ENCODE measurements at regions of chr3 and their contacts with region 1.

Region 1: DNA sequence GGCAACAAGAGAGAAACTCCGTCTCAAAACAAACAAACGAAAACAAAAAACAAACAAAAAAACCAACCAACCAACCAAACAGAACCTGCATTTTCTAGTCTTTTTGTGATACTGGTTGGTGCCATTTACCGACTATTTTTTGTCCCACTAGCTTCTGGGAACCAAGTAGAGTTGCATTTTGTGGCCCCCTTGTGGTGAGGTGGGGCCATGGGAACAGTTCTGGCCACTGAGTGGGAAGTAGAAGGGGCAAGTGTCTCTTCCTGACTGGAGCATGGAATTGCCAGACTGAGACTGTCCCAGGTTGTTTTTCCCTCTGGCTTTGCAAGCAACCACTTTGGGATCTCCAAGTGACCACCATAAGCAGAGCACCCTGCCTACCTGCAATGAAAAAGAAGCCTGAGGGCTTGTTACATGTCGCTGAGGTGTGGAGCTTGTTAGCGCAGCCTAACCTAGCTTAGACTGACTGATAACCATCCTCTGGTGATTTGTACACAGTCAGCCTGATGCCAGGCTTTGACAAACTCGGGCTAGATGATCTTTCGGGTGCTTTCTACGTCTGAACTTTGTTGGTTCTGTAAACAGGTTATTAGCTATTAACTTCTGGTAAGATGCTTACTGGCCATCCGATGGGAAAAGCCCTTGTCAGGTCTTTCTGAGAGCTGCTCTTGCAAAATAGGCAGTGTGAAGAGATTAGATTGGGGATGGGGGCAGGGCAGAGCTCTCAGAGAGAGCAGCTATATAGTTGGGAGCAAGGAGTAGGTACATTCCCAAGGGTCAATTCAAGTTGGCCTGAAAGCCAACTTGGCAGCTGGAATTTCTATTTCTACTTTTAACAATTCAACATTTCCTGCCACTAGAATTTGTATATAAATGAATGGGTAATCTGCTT is 172.2 kb downstream of the SSR3 start:
- DNase-seq: no peak
- ATAC-seq: no peak
- H3K4me3 ChIP-seq: no peak overlapping the region
- H3K27ac ChIP-seq: peak overlapping the region in 4 of 10 donors; percentile 6 to 61 (median 36)
- H3K4me1 ChIP-seq: peaks cover 0 to 29% (median 3%) of the 10 kb centered on the region in 9 donors
- H3K27me3 ChIP-seq: peaks cover 0 to 4% (median 0%) of the 10 kb centered on the region in 7 donors
- CTCF ChIP-seq: peak in 7 of 9 donors; percentile 30 to 60 (median 38)

Region 2: GRCh38 chr3:155859859-155860258 is 522.8 kb before region 1 on chr3:
- intact Hi-C with region 1: no loop called
- DNase-seq: no peak
- ATAC-seq: no peak
- H3K4me3 ChIP-seq: no peak overlapping the region
- H3K27ac ChIP-seq: no peak overlapping the region
- H3K4me1 ChIP-seq: peaks cover 0 to 9% (median 4%) of the 10 kb centered on the region in 9 donors
- H3K27me3 ChIP-seq: no peaks in the 10 kb centered on the region
- CTCF ChIP-seq: peak in 4 of 9 donors; percentile 25 to 46 (median 34)

Region 3: DNA sequence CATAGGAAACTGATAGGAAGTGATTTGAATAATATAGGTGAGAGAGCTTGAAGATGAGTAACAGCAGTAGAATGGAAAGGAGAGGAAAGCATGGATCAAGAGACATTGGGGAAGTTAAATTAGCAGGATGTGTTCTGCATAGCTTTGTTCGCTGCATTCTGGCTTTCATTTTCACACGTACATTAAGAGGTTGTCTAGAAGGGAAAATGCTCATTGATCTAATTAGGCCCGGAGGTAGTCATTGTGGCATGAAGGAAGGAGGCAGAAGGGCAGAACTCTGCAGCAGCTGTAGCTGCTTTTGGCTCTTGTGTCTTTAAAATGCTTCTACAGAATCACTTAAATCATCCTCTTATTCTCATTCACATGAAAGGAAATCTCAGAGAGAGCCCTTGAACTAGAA is 222.1 kb before region 1 on chr3:
- intact Hi-C with region 1: loop called in 2 of 10 experiments (anchors 10 kb)
- DNase-seq: no peak
- ATAC-seq: no peak
- H3K4me3 ChIP-seq: no peak overlapping the region
- H3K27ac ChIP-seq: no peak overlapping the region
- H3K4me1 ChIP-seq: no peaks in the 10 kb centered on the region
- H3K27me3 ChIP-seq: no peaks in the 10 kb centered on the region
- CTCF ChIP-seq: no peak

Region 4: DNA sequence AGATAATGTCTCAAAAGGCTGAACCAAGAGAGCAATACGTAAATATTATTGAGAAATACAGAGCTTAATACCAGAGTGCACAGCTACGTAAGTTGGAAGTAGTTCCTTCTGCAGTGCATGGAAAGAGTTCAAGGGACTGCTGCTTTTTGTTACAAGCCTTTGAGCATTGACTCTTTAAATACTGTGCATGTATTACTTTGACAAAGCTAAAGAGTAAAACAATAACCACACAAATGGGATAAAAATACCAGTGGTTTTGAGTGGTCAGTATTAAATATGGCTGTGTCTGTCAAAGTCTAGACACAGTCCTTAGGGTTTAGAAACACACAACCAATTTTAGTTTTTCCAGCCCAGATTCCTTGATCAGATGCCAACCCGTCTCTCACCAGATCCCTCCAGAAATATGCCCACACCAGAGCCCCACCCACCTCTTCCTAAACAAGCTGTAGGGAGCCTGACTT is 110.1 kb after region 1 on chr3:
- intact Hi-C with region 1: loop called in 1 of 10 experiments (anchors 10 kb)
- DNase-seq: no peak
- ATAC-seq: peak in 1 of 8 donors; percentile 31
- H3K4me3 ChIP-seq: no peak overlapping the region
- H3K27ac ChIP-seq: peak overlapping the region in 1 of 10 donors; percentile 55
- H3K4me1 ChIP-seq: peaks cover 0 to 32% (median 3%) of the 10 kb centered on the region in 9 donors
- H3K27me3 ChIP-seq: no peaks in the 10 kb centered on the region
- CTCF ChIP-seq: no peak

Region 5: DNA sequence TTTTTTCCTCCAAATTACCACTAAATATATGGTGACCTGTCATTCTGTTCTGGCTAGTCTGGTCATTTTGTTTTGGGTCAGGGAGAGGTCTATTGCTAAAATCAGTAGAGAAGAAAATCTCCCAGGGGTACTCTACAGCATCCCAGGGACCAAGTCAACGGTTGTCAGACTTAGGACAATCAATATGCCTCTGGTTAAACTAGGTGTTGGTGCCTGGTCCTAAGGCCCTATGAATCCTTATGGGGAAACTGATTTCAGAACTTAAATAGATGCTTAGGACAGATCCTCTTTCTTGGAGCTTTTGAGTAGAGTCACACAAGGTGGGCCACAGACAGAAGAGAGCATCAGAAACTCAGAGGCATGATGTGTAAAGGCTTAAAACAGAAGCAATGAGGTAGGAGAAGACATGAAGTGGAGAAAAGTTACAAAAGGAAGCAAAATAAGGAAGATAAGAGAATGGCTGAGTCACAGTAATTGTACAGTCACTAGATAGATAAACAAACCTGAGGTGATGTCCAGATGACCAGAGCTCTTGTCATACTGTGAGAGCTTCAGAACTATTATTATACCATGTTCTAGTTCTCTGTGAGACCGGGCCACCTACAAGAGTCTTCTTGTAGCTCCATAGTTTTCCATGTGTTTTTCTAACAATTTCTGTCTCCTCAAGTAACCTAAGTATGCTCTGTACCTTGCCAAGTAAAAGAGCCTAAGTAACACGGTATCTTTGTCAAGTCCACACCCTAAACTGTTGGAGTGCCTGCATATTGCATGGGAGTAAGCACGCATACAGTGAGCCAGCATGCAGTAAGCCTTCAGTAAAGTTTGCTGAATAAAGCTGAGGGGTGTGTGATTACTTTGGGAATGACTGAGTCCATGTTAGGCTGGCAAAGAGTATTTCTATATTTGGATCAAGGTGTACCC is 398.9 kb after region 1 on chr3:
- intact Hi-C with region 1: no loop called
- DNase-seq: no peak
- ATAC-seq: no peak
- H3K4me3 ChIP-seq: no peak overlapping the region
- H3K27ac ChIP-seq: no peak overlapping the region
- H3K4me1 ChIP-seq: peaks cover 0 to under 1% (median 0%) of the 10 kb centered on the region in 9 donors
- H3K27me3 ChIP-seq: no peaks in the 10 kb centered on the region
- CTCF ChIP-seq: no peak

Measured in heart right ventricle (tissue), 16 donors.